Activated CD4-positive, alpha-beta memory T cell treated with anti-CD3 and anti-CD28 coated beads for 36 hours (primary cell): ENCODE measurements at regions of chr5 and their contacts with region 1.

Region 1: DNA sequence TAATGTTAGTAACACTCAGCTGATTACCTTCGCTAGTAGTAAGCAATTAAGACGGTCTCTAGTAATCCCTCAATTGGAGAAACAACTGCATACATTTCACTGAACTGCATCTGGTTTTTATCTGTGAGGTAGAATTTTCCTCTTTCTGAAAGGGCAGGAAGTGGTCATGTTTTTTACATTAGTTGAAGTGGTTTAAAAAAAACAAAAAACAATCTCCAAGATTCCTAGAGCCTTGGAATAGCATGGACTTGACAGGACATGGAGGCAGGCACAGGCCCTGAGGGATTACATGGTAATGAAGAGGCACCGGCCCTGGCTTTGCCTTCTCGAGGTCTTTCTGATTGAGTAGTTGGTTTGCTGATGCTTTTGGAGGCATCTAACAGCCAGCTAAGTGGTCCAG is 25.8 kb downstream of the THBS4 start:
- DNase-seq: no peak
- H3K4me3 Mint-ChIP-seq: no peak overlapping the region
- H3K27ac Mint-ChIP-seq: no peak overlapping the region
- H3K4me1 Mint-ChIP-seq: peaks cover 11% of the 10 kb centered on the region
- H3K27me3 Mint-ChIP-seq: no peaks in the 10 kb centered on the region

Region 2: GRCh38 chr5:80034962-80035821 is 25.8 kb before region 1 on chr5 and contains the start of gene THBS4:
- CTCF ChIA-PET with region 1: interaction called, 5 read pairs
- POLR2A ChIA-PET with region 1: interaction called, 3 read pairs
- intact Hi-C with region 1: loop called (anchors 1 kb)
- DNase-seq: no peak
- H3K4me3 Mint-ChIP-seq: peak within 1 kb of the TSS; percentile 38
- H3K27ac Mint-ChIP-seq: no peak within 1 kb of the TSS
- H3K4me1 Mint-ChIP-seq: peaks cover 37% of the 10 kb centered on the region
- H3K27me3 Mint-ChIP-seq: peaks cover 45% of the 10 kb centered on the region
- total RNA-seq, gene THBS4: 1.8 to 2.2 TPM

Region 3: GRCh38 chr5:80268916-80269315 is 207.9 kb after region 1 on chr5:
- CTCF ChIA-PET with region 1: no interaction called
- POLR2A ChIA-PET with region 1: no interaction called
- intact Hi-C with region 1: no loop called
- DNase-seq: no peak
- H3K4me3 Mint-ChIP-seq: peak overlapping the region; percentile 20
- H3K27ac Mint-ChIP-seq: peak overlapping the region; percentile 82
- H3K4me1 Mint-ChIP-seq: peaks cover 29% of the 10 kb centered on the region
- H3K27me3 Mint-ChIP-seq: no peaks in the 10 kb centered on the region